ENCODE measurements at regions of chr13 and their contacts with region 1.

Region 1: DNA sequence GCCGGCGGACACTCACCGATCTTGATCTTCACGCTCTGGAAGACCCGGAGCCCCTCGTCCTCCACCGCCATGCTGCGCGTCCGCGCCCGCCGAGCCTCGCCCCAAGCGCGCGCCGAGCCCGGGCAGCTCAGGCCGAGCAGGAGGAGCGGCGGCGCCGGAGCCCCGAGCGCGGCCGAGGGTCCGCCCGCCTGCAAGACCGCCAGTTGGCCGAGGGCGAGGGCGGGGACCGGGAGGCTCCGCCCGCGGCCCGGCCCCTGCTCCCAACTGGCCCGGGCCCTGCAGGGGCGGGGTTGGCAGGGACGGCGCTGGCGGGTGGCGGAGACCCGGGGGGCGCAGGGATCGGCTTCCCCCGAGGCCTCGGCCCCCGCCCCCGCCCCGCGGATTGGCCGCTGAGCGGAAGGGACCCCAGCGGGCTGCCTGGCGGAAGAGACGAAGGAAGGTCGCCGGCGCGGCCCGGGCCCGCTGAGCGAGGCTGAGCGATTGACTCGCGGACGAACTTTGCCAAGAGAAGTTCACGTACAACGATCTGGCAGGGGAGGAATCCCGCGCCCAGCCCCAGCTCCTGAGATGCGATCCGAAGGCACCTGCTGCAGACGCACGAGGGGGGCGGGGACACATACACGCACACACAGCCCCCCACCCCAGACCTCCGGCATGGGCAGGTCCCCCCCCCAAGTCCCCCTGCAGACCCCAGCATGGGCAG is at the start of gene RASA3:
- DNase-seq: peak; percentile 58 to 66
- ATAC-seq: peak; percentile 45 to 54
- H3K4me3 ChIP-seq: peak within 1 kb of the TSS; percentile 72 to 96 (median 79)
- H3K27ac ChIP-seq: peak within 1 kb of the TSS; percentile 90 to 95 (median 92)
- H3K4me1 ChIP-seq: peaks cover 33 to 39% of the 10 kb centered on the region in 2 donors
- H3K27me3 ChIP-seq: no peaks in the 10 kb centered on the region
- CTCF ChIP-seq: no peak
- POLR2A ChIP-seq: peak; percentile 90 to 92
- total RNA-seq, gene RASA3: 3.4 to 22.2 (median 10.8) TPM

Region 2: GRCh38 chr13:113837554-113838355 is 294.8 kb before region 1 on chr13:
- in situ Hi-C with region 1: no loop called
- intact Hi-C with region 1: loop called (anchors 10 kb)
- DNase-seq: peak; percentile 96 to 99
- ATAC-seq: peak; percentile 87 to 90
- H3K4me3 ChIP-seq: peak overlapping the region; percentile 8 to 37 (median 15)
- H3K27ac ChIP-seq: peak overlapping the region; percentile 94 to 98 (median 96)
- H3K4me1 ChIP-seq: peaks cover 41 to 42% of the 10 kb centered on the region in 2 donors
- H3K27me3 ChIP-seq: no peaks in the 10 kb centered on the region
- CTCF ChIP-seq: no peak
- POLR2A ChIP-seq: peak; percentile 47 to 48

Region 3: GRCh38 chr13:114035583-114036531 is 96.7 kb before region 1 on chr13:
- in situ Hi-C with region 1: no loop called
- intact Hi-C with region 1: loop called (anchors 5 kb)
- DNase-seq: peak in 1 of 2 donors; percentile 46
- ATAC-seq: peak; percentile 51 to 53
- H3K4me3 ChIP-seq: no peak overlapping the region
- H3K27ac ChIP-seq: peak overlapping the region in 3 of 4 donors; percentile 11 to 22 (median 21)
- H3K4me1 ChIP-seq: peaks cover 34 to 45% of the 10 kb centered on the region in 2 donors
- H3K27me3 ChIP-seq: no peaks in the 10 kb centered on the region
- CTCF ChIP-seq: no peak
- POLR2A ChIP-seq: no peak

Region 4: GRCh38 chr13:114065141-114065925 is 67.2 kb before region 1 on chr13:
- in situ Hi-C with region 1: no loop called
- intact Hi-C with region 1: loop called (anchors 1 kb)
- DNase-seq: peak; percentile 77 to 86
- ATAC-seq: peak; percentile 86
- H3K4me3 ChIP-seq: peak overlapping the region; percentile 55 to 70 (median 56)
- H3K27ac ChIP-seq: peak overlapping the region; percentile 93 to 96 (median 95)
- H3K4me1 ChIP-seq: peaks cover 41 to 47% of the 10 kb centered on the region in 2 donors
- H3K27me3 ChIP-seq: no peaks in the 10 kb centered on the region
- CTCF ChIP-seq: peak in 1 of 5 experiments; percentile 40
- POLR2A ChIP-seq: peak in 1 of 2 donors; percentile 31

Region 5: GRCh38 chr13:114107686-114108081 is 24.9 kb before region 1 on chr13:
- in situ Hi-C with region 1: no loop called
- intact Hi-C with region 1: loop called (anchors 1 kb)
- DNase-seq: peak; percentile 41 to 82
- ATAC-seq: peak; percentile 78 to 87
- H3K4me3 ChIP-seq: peak overlapping the region; percentile 28 to 39 (median 36)
- H3K27ac ChIP-seq: peak overlapping the region; percentile 78 to 86 (median 84)
- H3K4me1 ChIP-seq: peaks cover 52 to 70% of the 10 kb centered on the region in 2 donors
- H3K27me3 ChIP-seq: no peaks in the 10 kb centered on the region
- CTCF ChIP-seq: no peak
- POLR2A ChIP-seq: peak; percentile 50 to 61

Region 6: GRCh38 chr13:114296902-114297301 is 164.3 kb after region 1 on chr13:
- in situ Hi-C with region 1: no loop called
- intact Hi-C with region 1: no loop called
- DNase-seq: no peak
- ATAC-seq: no peak
- H3K4me3 ChIP-seq: no peak overlapping the region
- H3K27ac ChIP-seq: no peak overlapping the region
- H3K4me1 ChIP-seq: no peaks in the 10 kb centered on the region
- H3K27me3 ChIP-seq: no peaks in the 10 kb centered on the region
- CTCF ChIP-seq: no peak
- POLR2A ChIP-seq: no peak

Measured in gastrocnemius medialis (tissue), 4 donors.